ENCODE measurements at regions of chr10 and their contacts with region 1.

Region 1: DNA sequence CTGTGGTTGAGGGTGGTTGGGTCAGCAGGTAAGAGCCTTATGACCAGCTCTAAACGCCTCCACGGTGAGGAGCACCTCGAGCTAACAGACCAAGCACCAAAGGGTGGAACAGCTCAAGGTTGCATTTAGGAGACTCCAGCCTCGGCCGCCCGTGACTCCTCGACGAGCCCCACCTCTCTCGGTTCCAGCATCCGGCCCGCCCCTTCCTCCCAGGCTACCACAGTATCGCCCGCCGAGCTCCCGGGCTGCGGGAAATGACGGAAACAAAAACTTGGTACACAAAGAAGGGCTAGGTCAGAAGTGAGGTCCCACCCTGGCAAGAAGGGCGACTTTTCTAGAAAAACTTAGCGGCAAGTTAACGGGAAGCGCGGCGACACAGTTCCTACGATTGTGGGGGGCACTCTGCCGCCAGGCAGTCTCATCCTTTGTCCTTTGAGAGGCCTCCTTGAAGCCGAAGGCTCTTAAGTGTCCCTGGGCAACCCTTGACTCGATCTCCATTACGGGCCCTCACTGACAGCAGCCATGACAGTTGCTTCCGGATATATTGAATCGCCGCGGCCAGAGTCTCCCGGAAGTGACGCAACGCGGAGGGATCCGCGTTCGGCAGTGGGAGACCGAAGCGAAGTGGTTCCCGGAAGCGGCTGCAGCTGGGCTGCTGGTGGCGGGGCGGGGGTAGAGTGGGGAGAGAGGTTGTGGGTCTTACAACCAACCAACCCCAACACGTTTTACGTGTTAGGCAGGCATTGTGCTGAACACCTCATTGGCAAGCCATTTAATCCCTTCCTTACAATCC is 40.2 kb upstream of the ZNF518A start:
- DNase-seq: peak; percentile 98
- ATAC-seq: peak; percentile 97

Region 2: GRCh38 chr10:96043033-96043932 is 46.6 kb before region 1 on chr10 and contains the start of gene CCNJ:
- intact Hi-C with region 1: loop called (anchors 2 kb)
- DNase-seq: peak; percentile 94
- ATAC-seq: peak; percentile 95
- total RNA-seq, gene CCNJ: 2.7 TPM

Region 3: GRCh38 chr10:96129387-96130325 is 39.8 kb after region 1 on chr10 and contains the start of gene ZNF518A:
- intact Hi-C with region 1: loop called (anchors 1 kb)
- DNase-seq: peak; percentile 96
- ATAC-seq: peak; percentile 96
- total RNA-seq, gene ZNF518A: 10.9 TPM

Measured in Right ventricle myocardium inferior (tissue), 1 donor.